ENCODE measurements at regions of chr1 and their contacts with region 1.

Region 1: DNA sequence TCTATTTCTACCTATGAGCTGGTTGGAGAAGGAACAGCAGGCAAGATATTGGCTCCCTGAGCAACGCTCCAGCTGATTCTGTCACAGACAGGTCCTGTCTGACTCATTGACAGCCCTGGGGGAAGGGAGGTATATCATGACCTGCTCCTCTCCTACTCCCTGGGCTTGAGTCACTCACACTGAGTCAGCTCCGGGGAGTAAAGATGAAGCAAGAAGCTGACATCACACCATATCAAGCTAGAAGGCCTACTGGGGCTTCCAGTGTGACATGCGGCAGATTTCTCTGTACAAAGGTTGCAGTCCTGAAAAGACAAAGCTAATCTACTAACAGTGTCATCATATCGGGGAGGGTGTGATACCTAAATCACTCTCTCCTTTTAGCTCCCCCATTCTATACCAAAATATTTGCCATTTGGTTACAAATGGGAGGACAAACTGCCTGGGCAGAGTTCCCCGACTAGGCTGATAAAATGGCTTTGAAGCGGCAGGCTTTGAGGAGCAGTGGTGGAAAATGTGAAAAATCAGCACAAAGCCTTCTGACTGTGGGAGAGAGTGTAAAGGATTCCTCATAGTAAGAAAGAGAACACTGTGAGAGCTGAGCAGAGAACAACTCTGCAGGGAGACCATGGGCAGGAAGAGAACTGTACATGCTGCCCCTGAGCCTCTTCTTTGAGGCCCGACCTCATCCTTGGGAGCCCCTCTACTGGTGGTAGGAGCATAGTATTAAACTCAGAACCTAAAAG is 15.5 kb downstream of the PI4KB start:
- DNase-seq: peak; percentile 100
- ATAC-seq: peak; percentile 94
- H3K4me3 ChIP-seq: peak overlapping the region; percentile 39
- H3K27ac ChIP-seq: peak overlapping the region; percentile 91
- H3K4me1 ChIP-seq: peaks cover 51% of the 10 kb centered on the region
- H3K27me3 ChIP-seq: no peaks in the 10 kb centered on the region
- CTCF ChIP-seq: no peak

Region 2: DNA sequence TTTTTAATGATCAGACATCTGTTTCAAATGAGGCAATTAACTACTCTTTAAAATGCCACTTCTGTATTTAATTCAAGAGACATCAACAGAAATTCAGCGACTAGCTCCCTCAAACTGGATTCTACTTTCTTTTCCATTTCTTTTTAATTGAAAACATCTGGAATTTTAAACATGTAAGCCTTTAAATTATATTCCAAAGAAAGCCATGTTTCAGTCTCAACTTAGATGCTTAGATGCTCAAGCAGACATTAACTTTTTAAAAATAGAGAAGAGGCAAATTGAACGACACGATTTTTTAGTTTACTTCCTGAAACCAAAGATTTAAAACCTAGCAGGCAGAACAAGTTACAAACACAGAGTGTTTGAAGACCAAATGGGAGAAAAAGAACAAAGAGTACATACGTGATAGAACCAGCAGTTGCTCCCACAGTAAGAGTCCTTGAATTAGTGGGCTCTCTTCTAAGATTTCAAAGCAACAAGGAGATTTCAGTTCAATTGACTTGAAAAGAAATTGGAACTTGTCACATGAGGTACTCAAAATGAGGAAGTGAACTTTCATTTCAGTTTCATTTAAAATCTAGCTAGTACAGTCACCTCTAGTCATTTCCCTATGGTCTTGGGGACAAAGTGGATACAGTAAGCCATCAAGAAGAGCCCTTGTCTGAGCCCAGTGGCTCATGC is 546.3 kb before region 1 on chr1 and contains the start of gene CTSS:
- CTCF ChIA-PET with region 1: no interaction called
- POLR2A ChIA-PET with region 1: no interaction called
- intact Hi-C with region 1: no loop called
- DNase-seq: peak; percentile 16
- ATAC-seq: no peak; the same call in 1 of the 2 replicates
- H3K4me3 ChIP-seq: no peak within 1 kb of the TSS
- H3K27ac ChIP-seq: no peak within 1 kb of the TSS
- H3K4me1 ChIP-seq: peaks cover 13% of the 10 kb centered on the region
- H3K27me3 ChIP-seq: no peaks in the 10 kb centered on the region
- CTCF ChIP-seq: no peak
- total RNA-seq, gene CTSS: 0.46 TPM in 1 of 2 replicates, not detected in the other

Region 3: DNA sequence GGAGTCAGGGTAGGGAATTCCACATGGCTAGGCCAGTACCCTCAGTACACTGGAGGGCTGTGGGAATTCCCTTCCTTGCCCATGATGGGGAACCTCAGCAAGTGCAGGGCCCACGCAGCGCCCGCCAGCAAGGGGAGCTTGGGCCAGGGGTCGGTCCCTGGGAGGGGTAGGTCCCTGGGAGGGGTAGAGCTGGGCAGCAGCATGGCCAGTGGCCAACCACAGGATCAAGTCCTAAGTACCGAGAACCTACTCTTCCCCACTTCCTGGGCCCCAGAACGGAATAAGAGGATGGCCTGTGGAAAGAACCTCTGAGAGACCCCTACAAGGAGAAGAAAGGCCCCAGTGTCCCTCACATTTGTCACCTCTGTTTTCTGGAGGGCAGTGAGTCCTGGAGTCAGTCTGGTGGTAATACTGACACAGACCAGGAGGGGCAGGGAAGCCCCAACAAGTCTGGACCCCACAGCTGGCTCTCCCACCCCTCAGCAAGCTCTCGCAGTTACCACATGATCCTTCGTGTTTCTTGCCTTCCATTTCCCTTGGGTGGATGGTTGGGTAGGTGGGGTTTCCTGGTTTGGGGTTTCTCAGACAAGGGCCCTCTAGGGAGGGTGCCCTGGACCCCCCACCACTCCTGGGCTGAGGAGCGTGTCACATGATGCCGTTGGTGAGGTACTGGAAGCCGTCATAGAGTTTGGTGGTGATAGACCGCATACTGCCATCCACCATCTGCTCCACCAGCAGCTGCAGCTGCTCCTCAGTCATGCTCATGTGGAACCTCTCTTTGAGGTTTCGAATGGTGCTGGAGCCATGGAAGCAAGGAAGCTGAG is 19.3 kb before region 1 on chr1:
- CTCF ChIA-PET with region 1: no interaction called
- POLR2A ChIA-PET with region 1: interaction called, 27 read pairs
- intact Hi-C with region 1: no loop called
- DNase-seq: no peak
- ATAC-seq: no peak; the same call in 1 of the 2 replicates
- H3K4me3 ChIP-seq: no peak overlapping the region
- H3K27ac ChIP-seq: no peak overlapping the region
- H3K4me1 ChIP-seq: no peaks in the 10 kb centered on the region
- H3K27me3 ChIP-seq: no peaks in the 10 kb centered on the region
- CTCF ChIP-seq: 0 out of 2 replicates have a peak, but pooled peaks have one; percentile 9

Region 4: GRCh38 chr1:151340870-151341754 is 29.4 kb after region 1 on chr1:
- CTCF ChIA-PET with region 1: interaction called, 15 read pairs
- POLR2A ChIA-PET with region 1: interaction called, 3 read pairs
- intact Hi-C with region 1: no loop called
- DNase-seq: peak; percentile 93
- ATAC-seq: peak; percentile 93
- H3K4me3 ChIP-seq: no peak overlapping the region
- H3K27ac ChIP-seq: no peak overlapping the region
- H3K4me1 ChIP-seq: peaks cover 6% of the 10 kb centered on the region
- H3K27me3 ChIP-seq: no peaks in the 10 kb centered on the region
- CTCF ChIP-seq: peak; percentile 95